HepG2 (cell line): ENCODE measurements at regions of chr20 and their contacts with region 1.

Region 1: DNA sequence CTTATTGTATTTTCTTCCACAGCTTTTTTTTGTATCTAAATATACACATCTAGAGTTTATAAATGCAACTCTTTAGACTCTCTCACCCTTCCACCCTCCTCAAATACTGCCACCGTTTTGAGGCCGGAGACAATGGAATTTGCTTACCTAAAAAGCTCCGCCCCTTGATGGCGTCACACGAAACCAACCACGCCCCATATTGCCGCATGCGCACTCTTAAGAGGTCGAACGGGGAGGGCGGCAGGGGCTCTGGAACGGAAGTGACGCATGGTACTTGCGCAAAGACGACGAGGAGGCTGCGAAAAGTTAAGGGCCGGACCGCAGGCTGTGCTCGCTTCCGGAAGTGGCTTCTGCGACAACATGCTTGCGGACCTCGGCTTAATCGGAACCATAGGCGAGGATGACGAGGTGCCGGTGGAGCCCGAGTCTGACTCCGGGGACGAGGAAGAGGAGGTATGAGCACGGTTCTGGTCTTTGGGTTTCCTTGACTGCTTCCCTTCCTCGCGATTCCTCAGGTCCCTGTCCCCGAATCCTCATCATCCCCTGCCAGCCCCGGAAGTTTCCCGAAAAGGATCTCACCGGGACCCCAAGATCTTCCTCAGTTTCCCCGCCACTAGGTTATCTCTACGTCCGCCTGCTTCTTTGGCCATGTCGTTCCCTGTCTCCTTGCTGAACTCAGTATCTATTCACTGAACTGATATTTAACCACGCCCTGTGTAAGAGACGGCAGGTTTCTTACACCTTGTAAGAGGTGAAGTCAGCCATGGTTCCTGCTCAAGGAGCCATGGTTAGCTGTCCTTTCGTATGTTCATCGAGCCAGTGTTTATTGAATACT is at the start of gene DDX27:
- DNase-seq: peak; percentile 99
- ATAC-seq: peak; percentile 91
- H3K4me3 ChIP-seq: peak within 1 kb of the TSS; percentile 81 to 87 (median 84)
- H3K27ac ChIP-seq: peak within 1 kb of the TSS; percentile 60
- H3K4me1 ChIP-seq: peaks cover 30% of the 10 kb centered on the region
- H3K27me3 ChIP-seq: no peaks in the 10 kb centered on the region; a peak in 1 of 5 replicates
- CTCF ChIP-seq: no peak
- EP300 ChIP-seq: peak in 1 of 2 experiments; percentile 48; a peak in 2 of 4 replicates
- POLR2A ChIP-seq: peak; percentile 96 to 99
- RAD21 ChIP-seq: peak; percentile 25; the same call in 1 of the 2 replicates
- total RNA-seq, gene DDX27: 72.8 and 88.3 TPM in 2 replicates

Region 2: GRCh38 chr20:49046087-49046900 is 173.0 kb before region 1 on chr20 and contains the start of gene CSE1L:
- CTCF ChIA-PET with region 1: no interaction called
- POLR2A ChIA-PET with region 1: interaction called, 15 read pairs
- in situ Hi-C with region 1: no loop called
- intact Hi-C with region 1: loop called (anchors 1 kb)
- DNase-seq: peak; percentile 97
- ATAC-seq: peak; percentile 97
- H3K4me3 ChIP-seq: peak within 1 kb of the TSS; percentile 84 to 99 (median 87)
- H3K27ac ChIP-seq: peak within 1 kb of the TSS; percentile 89
- H3K4me1 ChIP-seq: peaks cover 50% of the 10 kb centered on the region
- H3K27me3 ChIP-seq: no peaks in the 10 kb centered on the region; a peak in 2 of 5 replicates
- CTCF ChIP-seq: no peak
- EP300 ChIP-seq: peak in 1 of 2 experiments; percentile 20; a peak in 2 of 4 replicates
- POLR2A ChIP-seq: peak; percentile 93 to 96
- RAD21 ChIP-seq: peak; percentile 56
- total RNA-seq, gene CSE1L: 258 and 449 TPM in 2 replicates

Region 3: GRCh38 chr20:49132995-49133478 is 86.3 kb before region 1 on chr20:
- CTCF ChIA-PET with region 1: interaction called, 70 read pairs
- POLR2A ChIA-PET with region 1: interaction called, 8 read pairs
- in situ Hi-C with region 1: loop called (anchors 5 kb)
- intact Hi-C with region 1: loop called (anchors 1 kb)
- DNase-seq: peak; percentile 83
- ATAC-seq: peak; percentile 75
- H3K4me3 ChIP-seq: no peak overlapping the region
- H3K27ac ChIP-seq: no peak overlapping the region
- H3K4me1 ChIP-seq: peaks cover 13% of the 10 kb centered on the region; the same call in 1 of the 2 replicates
- H3K27me3 ChIP-seq: no peaks in the 10 kb centered on the region
- CTCF ChIP-seq: peak; percentile 72
- EP300 ChIP-seq: no peak
- POLR2A ChIP-seq: no peak
- RAD21 ChIP-seq: peak; percentile 83

Region 4: GRCh38 chr20:49179368-49180277 is 39.7 kb before region 1 on chr20:
- CTCF ChIA-PET with region 1: no interaction called
- POLR2A ChIA-PET with region 1: interaction called, 49 read pairs
- in situ Hi-C with region 1: no loop called
- intact Hi-C with region 1: loop called (anchors 5 kb)
- DNase-seq: peak; percentile 93
- ATAC-seq: peak; percentile 81
- H3K4me3 ChIP-seq: peak overlapping the region; percentile 4 to 44 (median 14); a peak in 4 of 6 replicates
- H3K27ac ChIP-seq: peak overlapping the region; percentile 83
- H3K4me1 ChIP-seq: peaks cover 72% of the 10 kb centered on the region
- H3K27me3 ChIP-seq: no peaks in the 10 kb centered on the region
- CTCF ChIP-seq: no peak
- EP300 ChIP-seq: peak; percentile 46 to 83; a peak in 3 of 4 replicates
- POLR2A ChIP-seq: no peak
- RAD21 ChIP-seq: no peak

Region 5: GRCh38 chr20:49186535-49187329 is 32.6 kb before region 1 on chr20:
- CTCF ChIA-PET with region 1: no interaction called
- POLR2A ChIA-PET with region 1: interaction called, 49 read pairs
- in situ Hi-C with region 1: no loop called
- intact Hi-C with region 1: loop called (anchors 5 kb)
- DNase-seq: peak; percentile 62
- ATAC-seq: peak; percentile 2; the same call in 1 of the 3 replicates
- H3K4me3 ChIP-seq: peak overlapping the region; percentile 88 to 99 (median 97)
- H3K27ac ChIP-seq: peak overlapping the region; percentile 77
- H3K4me1 ChIP-seq: peaks cover 42% of the 10 kb centered on the region
- H3K27me3 ChIP-seq: peaks cover 0 to 5% of the 10 kb centered on the region in 2 experiments; a peak in 1 of 5 replicates
- CTCF ChIP-seq: peak; percentile 9; the same call in 1 of the 2 replicates
- EP300 ChIP-seq: peak in 1 of 2 experiments; percentile 18; a peak in 1 of 4 replicates
- POLR2A ChIP-seq: peak; percentile 51 to 60; a peak in 3 of 4 replicates
- RAD21 ChIP-seq: no peak

Region 6: GRCh38 chr20:49237531-49237930 is 18.2 kb after region 1 on chr20:
- CTCF ChIA-PET with region 1: no interaction called
- POLR2A ChIA-PET with region 1: interaction called, 11 read pairs
- in situ Hi-C with region 1: no loop called
- intact Hi-C with region 1: no loop called
- DNase-seq: no peak
- ATAC-seq: no peak
- H3K4me3 ChIP-seq: no peak overlapping the region
- H3K27ac ChIP-seq: no peak overlapping the region
- H3K4me1 ChIP-seq: no peaks in the 10 kb centered on the region
- H3K27me3 ChIP-seq: no peaks in the 10 kb centered on the region
- CTCF ChIP-seq: no peak
- EP300 ChIP-seq: no peak
- POLR2A ChIP-seq: no peak
- RAD21 ChIP-seq: no peak

Region 7: GRCh38 chr20:49768204-49769047 is 549.1 kb after region 1 on chr20:
- CTCF ChIA-PET with region 1: no interaction called
- POLR2A ChIA-PET with region 1: no interaction called
- in situ Hi-C with region 1: no loop called
- intact Hi-C with region 1: no loop called
- DNase-seq: peak; percentile 100
- ATAC-seq: peak; percentile 85
- H3K4me3 ChIP-seq: peak overlapping the region in 2 of 3 experiments; percentile 11 to 45; a peak in 2 of 6 replicates
- H3K27ac ChIP-seq: peak overlapping the region; percentile 85
- H3K4me1 ChIP-seq: peaks cover 84% of the 10 kb centered on the region
- H3K27me3 ChIP-seq: no peaks in the 10 kb centered on the region
- CTCF ChIP-seq: peak; percentile 25
- EP300 ChIP-seq: peak; percentile 99 to 100
- POLR2A ChIP-seq: peak in 1 of 2 experiments; percentile 61; a peak in 2 of 4 replicates
- RAD21 ChIP-seq: peak; percentile 62